Left ventricle myocardium superior (tissue), 1 donor: ENCODE measurements at regions of chr1 and their contacts with region 1.

Region 1: DNA sequence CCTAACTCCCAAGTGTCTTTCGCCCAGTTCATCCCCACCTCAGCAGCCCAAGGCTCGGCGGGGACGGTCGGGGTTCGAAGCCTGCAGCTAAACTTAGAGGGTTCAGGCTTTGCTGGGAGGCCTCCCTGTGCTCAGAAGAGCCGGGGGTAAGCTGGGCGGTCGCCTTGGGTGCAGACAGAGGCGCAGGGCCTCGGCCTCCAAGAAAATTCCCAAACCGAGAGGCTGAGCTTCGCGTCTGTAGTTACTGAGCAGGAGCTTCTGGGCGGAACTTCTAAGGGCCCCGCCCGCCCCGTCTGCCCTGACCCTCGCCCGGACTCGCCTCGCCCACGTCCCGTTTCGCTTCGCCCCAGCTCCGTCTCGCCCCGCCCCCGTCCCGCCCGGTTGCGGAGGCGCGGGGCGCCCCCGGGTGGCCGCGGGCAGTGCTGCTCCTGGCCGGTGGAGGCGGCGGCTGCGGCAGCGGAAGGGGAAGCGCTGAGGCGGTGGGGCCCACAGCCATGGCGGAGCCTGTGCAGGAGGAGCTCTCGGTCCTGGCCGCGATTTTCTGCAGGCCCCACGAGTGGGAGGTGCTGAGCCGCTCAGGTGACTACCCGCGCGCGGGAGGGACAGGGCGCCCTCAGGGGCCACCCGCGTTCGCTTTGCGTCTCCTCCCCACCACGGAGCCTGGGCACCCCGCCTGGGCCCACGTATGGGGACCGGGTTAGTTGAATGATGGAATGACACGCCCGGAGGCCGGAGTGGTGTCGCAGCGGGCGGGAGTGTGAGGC is at the start of gene RWDD3:
- DNase-seq: peak; percentile 98
- ATAC-seq: peak; percentile 94
- total RNA-seq, gene RWDD3: 15.9 TPM

Region 2: DNA sequence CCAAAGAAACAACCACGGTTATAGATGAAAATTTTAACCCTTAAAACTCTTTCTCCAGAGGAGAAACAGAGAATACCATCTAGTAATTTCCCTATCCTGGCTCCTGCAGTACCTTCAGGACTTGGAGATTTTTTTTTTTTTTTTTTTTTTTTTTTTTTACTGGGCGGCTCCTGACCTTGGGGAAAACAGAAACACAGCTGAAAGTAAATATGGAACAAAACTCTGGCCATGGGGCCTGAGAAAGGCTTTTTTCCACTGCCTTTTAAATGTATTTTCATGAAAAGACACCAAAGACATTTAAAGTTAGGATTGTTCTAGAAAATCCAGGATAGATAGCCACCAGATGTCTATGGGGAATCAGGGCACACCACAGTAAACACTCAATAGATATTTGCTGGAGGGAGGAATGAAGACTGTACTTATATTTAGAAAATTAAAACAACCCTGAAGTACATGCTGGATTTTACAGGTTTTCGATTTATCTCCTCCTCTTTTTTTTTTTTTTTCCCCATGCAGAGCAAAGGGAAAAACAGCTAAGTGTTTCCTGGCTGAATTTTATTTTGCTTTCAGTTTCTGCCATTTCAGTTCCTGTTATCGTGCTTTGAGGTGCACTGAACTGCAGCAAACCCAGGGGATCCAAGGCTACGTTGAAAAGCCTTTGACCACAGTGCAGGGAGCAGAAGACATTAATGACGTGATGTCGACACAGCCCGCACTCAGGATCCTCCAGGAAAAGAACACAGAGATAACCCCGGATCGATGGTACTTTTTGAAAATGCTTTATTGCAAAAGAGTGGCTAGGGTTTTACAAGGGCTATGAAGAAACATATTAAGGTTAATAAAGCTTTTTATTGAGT is 271.3 kb before region 1 on chr1:
- intact Hi-C with region 1: no loop called
- DNase-seq: no peak
- ATAC-seq: peak; percentile 77

Region 3: DNA sequence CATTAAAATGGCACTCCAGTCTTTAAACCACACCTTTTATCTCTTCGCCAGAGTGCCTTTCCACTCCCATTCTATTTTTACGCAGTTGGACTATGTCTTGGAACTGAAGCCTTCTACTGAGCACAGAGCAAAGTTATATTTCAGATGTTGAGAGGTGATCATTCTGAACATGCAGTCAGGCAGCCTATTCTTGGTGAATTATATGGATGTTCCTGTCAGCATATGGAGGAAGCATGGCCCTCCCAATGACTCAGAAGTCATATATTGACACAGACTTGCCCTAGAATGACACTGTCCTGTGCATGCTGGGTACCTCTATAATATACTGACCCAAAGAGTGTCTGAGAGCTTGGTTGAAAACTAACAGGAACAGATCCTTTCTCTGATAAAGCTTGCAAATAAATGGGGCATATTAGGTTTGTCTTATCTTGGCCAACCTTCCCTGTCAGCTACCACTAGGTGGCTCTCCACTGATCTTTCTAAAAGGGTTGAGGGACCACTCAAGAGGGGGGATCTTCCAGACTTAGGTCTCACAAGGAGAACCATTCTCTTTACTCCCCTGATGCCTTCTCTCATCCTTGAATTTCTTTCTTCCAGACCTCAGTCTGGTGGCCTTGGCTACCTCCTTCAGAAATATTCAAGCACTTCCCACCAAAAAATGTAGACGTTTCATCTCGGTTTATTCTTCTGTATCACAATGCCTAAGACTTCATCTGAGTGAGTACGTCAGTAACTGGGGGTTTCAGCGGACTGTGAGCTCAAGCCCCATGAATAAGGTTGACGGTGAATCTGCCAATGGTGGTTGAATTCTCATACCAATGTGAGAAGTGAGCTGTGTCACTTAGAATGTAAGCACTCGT is 149.4 kb before region 1 on chr1:
- intact Hi-C with region 1: loop called (anchors 10 kb)
- DNase-seq: no peak
- ATAC-seq: peak; percentile 57

Region 4: DNA sequence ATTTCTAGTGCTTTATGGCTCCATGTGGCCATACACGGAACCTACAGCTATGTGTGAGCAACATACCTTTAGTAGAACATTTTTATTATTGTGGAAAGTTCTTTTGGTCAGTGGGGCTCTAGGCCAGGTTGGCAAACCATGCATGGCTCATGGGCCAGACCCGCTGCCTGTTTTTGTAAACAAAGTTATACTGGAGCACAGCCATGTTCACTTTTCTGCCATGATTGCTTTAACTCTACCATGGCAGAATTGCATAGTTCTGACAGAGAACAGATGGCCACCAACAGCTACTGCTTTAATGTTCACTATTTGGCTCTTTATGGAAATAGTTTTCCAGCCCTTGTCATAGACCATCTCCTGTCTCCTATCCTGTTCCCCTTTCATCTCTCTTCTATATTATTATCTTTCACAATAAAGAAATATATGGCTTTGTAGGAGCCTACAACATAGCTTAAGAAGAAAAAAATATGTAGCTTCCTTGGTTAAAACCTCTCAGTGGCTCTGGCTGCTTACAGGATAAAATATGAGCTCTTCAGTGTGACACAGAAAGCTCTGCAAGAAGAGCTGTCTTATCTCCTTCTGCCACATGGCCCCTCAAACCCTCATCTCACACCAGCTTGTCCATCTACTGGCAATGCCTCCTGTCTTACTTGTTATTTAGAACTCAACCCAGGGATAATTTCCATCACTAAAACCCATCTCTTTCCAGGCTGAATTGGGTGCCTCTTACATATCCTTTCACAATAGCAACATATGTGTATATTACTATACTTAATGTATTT is 54.5 kb before region 1 on chr1:
- intact Hi-C with region 1: loop called (anchors 10 kb)
- DNase-seq: no peak
- ATAC-seq: peak; percentile 77